K562 (cell line): ENCODE measurements at regions of chr2 and their contacts with region 1.

Region 1: GRCh38 chr2:42663106-42663780 is 94.8 kb downstream of the MTA3 start:
- DNase-seq: peak; percentile 46 to 78 (median 61)
- ATAC-seq: peak; percentile 97
- H3K4me3 ChIP-seq: no peak overlapping the region
- H3K27ac ChIP-seq: peak overlapping the region; percentile 6; the same call in 1 of the 3 replicates
- H3K4me1 ChIP-seq: peaks cover 3 to 5% of the 10 kb centered on the region in 2 experiments; a peak in 2 of 5 replicates
- H3K27me3 ChIP-seq: no peaks in the 10 kb centered on the region
- CTCF ChIP-seq: peak; percentile 93 to 94 (median 94)
- EP300 ChIP-seq: no peak
- POLR2A ChIP-seq: no peak
- RAD21 ChIP-seq: peak; percentile 72 to 85

Region 2: DNA sequence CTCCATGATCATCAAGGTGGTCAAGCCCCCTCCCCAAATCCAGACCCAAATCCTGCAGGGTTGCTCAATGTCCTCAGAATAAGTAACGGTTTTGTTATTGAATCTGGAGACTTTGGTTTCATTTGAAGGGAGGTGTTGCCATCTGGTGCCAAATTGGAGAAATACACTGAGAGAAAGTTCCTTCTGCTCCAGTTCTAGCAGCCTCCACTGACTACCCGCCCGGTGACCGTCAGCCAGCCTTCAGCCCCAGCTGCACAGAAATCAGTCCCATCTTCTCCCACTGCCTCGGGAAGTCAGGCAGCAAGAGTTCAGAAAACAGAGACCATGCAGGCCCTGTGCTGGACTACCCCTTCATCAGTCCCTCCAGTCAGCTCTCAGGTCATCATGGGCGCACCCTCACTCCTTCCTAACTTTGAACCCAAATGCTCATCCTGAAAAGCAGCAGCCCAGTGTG is 576.7 kb before region 1 on chr2:
- CTCF ChIA-PET with region 1: interaction called, 10 read pairs
- POLR2A ChIA-PET with region 1: no interaction called
- in situ Hi-C with region 1: no loop called
- intact Hi-C with region 1: no loop called
- DNase-seq: peak; percentile 44 to 59 (median 52)
- ATAC-seq: peak; percentile 70
- H3K4me3 ChIP-seq: no peak overlapping the region
- H3K27ac ChIP-seq: no peak overlapping the region
- H3K4me1 ChIP-seq: peaks cover 0 to 3% of the 10 kb centered on the region in 2 experiments; a peak in 1 of 5 replicates
- H3K27me3 ChIP-seq: peaks cover 2 to 9% of the 10 kb centered on the region in 2 experiments; a peak in 3 of 5 replicates
- CTCF ChIP-seq: peak; percentile 59 to 78 (median 71)
- EP300 ChIP-seq: no peak
- POLR2A ChIP-seq: no peak
- RAD21 ChIP-seq: peak; percentile 94 to 95

Region 3: DNA sequence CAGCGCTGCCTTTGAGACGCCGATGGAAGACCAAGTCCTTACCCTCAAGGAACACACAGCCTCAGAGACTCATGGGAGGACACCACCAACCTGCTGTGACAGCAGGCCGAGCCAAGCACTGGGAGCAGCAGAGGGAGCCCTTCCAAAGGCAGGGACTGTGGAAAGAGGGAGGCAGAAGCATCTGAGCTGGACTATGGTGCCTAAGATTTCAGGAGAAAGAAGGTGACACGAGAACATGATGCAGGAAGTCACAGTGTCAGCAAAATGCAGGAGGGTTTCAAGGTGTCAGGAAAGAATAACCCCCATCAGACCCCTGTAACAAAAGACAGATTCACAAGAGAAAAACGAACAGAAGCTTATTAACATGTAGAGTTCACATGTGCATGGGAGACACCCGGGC is 278.0 kb before region 1 on chr2:
- CTCF ChIA-PET with region 1: interaction called, 4 read pairs
- POLR2A ChIA-PET with region 1: no interaction called
- in situ Hi-C with region 1: no loop called
- intact Hi-C with region 1: loop called (anchors 1 kb)
- DNase-seq: peak in 2 of 4 experiments; percentile 19 to 47
- ATAC-seq: peak; percentile 87
- H3K4me3 ChIP-seq: no peak overlapping the region
- H3K27ac ChIP-seq: no peak overlapping the region
- H3K4me1 ChIP-seq: no peaks in the 10 kb centered on the region
- H3K27me3 ChIP-seq: peaks cover 10 to 53% of the 10 kb centered on the region in 2 experiments; a peak in 3 of 5 replicates
- CTCF ChIP-seq: peak; percentile 39 to 55 (median 47)
- EP300 ChIP-seq: no peak
- POLR2A ChIP-seq: no peak
- RAD21 ChIP-seq: peak; percentile 16 to 49; a peak in 2 of 4 replicates

Region 4: DNA sequence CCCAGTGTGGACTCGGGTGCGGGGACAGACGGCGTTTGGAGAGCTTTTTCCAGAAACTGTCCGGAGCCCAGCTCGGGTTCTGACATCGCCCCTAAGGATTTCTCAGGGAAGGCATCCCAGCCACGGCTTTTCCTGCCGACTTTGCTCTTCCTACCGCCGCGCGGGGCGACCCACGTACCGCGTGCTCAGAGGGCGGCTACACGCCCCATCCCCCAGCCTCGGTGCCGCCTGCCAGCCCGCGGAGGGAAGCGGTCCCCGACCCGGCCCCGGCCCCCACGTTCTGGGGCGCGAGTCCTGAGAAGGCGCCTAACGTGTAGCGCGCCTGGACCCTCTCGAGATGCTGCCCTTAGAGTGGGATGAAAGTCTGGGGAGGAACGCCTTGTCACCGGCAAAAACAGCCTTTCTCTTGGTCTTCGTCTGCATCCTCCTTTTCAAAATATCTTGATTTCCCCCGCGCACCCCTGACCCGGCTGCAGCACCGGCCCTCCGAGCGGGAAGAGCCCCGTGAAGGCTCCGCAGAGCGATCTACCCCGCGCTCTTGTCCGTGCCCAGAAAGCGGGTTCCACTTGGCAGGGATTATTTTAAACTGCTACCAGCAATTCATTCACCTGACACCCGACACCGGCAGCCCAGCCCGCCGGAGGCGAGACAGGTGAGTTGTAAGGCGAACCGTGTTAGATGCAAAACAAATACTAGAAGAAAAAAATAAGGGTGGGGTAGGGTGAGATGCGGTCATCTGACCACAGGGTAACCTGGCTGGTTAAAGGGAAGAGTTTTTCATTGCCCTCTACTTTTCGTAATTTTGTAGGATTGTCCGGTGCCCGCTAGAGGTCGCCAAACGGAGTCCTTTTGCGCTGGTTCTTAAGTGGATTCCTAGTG is 168.6 kb before region 1 on chr2:
- CTCF ChIA-PET with region 1: interaction called, 9 read pairs
- POLR2A ChIA-PET with region 1: no interaction called
- in situ Hi-C with region 1: no loop called
- intact Hi-C with region 1: loop called (anchors 1 kb)
- DNase-seq: peak; percentile 62 to 77 (median 69)
- ATAC-seq: peak; percentile 91
- H3K4me3 ChIP-seq: peak overlapping the region; percentile 36
- H3K27ac ChIP-seq: no peak overlapping the region
- H3K4me1 ChIP-seq: peaks cover 0 to 17% of the 10 kb centered on the region in 2 experiments; a peak in 2 of 5 replicates
- H3K27me3 ChIP-seq: peaks cover 11 to 19% of the 10 kb centered on the region in 2 experiments; a peak in 4 of 5 replicates
- CTCF ChIP-seq: peak; percentile 79 to 89 (median 89)
- EP300 ChIP-seq: no peak
- POLR2A ChIP-seq: no peak
- RAD21 ChIP-seq: peak; percentile 66 to 71

Region 5: DNA sequence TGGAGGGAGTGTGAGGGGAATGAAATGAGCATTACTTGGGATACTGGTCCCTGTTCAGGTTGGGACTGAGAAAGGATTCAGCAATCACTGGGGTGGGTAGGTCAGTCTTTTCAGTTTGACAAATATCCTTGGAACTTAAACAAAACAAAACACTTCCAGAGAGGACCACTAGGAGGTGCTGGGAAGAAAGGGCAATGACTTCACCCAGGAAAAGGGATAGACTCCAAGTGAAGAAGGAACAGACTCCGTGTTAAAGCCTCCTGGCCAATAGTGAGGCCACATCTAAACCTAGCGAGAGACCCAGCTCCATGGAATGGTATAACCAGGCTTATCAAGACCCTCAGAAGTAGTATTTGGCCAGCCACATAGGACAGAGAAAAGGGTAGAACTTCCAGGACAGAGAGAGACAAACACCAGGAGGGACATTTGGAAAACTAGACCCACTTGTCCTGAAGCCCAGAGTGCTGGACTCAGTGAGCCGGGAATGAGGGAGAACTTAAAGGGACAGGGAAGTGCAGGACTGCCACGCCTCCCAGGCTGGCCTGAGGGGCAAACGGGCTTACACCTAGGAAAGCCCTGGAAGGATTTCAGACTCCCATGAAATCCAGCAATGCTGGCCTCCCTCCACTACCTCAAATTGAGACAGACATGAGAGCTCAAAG is 149.9 kb before region 1 on chr2:
- CTCF ChIA-PET with region 1: interaction called, 5 read pairs
- POLR2A ChIA-PET with region 1: no interaction called
- in situ Hi-C with region 1: no loop called
- intact Hi-C with region 1: loop called (anchors 1 kb)
- DNase-seq: peak; percentile 54 to 65 (median 57)
- ATAC-seq: peak; percentile 89
- H3K4me3 ChIP-seq: no peak overlapping the region
- H3K27ac ChIP-seq: no peak overlapping the region
- H3K4me1 ChIP-seq: no peaks in the 10 kb centered on the region
- H3K27me3 ChIP-seq: peaks cover 6 to 10% of the 10 kb centered on the region in 2 experiments; a peak in 4 of 5 replicates
- CTCF ChIP-seq: peak; percentile 65 to 82 (median 71)
- EP300 ChIP-seq: no peak
- POLR2A ChIP-seq: no peak
- RAD21 ChIP-seq: peak; percentile 48 to 77